Activated naive CD4-positive, alpha-beta T cell treated with anti-CD3 and anti-CD28 coated beads for 36 hours (primary cell): ENCODE measurements at regions of chr6 and their contacts with region 1.

Region 1: GRCh38 chr6:30914076-30914853 is at the start of gene VARS2:
- DNase-seq: peak; percentile 90
- H3K4me3 Mint-ChIP-seq: peak within 1 kb of the TSS; percentile 87
- H3K27ac Mint-ChIP-seq: peak within 1 kb of the TSS; percentile 86
- H3K4me1 Mint-ChIP-seq: peaks cover 28% of the 10 kb centered on the region
- H3K27me3 Mint-ChIP-seq: no peaks in the 10 kb centered on the region
- total RNA-seq, gene VARS2: 78.1 to 82.8 TPM

Region 2: GRCh38 chr6:30928677-30929076 is 14.4 kb after region 1 on chr6:
- CTCF ChIA-PET with region 1: interaction called, 11 read pairs
- intact Hi-C with region 1: no loop called
- DNase-seq: no peak
- H3K4me3 Mint-ChIP-seq: no peak overlapping the region
- H3K27ac Mint-ChIP-seq: no peak overlapping the region
- H3K4me1 Mint-ChIP-seq: no peaks in the 10 kb centered on the region
- H3K27me3 Mint-ChIP-seq: no peaks in the 10 kb centered on the region

Region 3: GRCh38 chr6:31042806-31043205 is 128.5 kb after region 1 on chr6:
- CTCF ChIA-PET with region 1: interaction called, 11 read pairs
- intact Hi-C with region 1: loop called (anchors 1 kb)
- DNase-seq: peak; percentile 46
- H3K4me3 Mint-ChIP-seq: no peak overlapping the region
- H3K27ac Mint-ChIP-seq: no peak overlapping the region
- H3K4me1 Mint-ChIP-seq: peaks cover 3% of the 10 kb centered on the region
- H3K27me3 Mint-ChIP-seq: peaks cover 9% of the 10 kb centered on the region

Region 4: DNA sequence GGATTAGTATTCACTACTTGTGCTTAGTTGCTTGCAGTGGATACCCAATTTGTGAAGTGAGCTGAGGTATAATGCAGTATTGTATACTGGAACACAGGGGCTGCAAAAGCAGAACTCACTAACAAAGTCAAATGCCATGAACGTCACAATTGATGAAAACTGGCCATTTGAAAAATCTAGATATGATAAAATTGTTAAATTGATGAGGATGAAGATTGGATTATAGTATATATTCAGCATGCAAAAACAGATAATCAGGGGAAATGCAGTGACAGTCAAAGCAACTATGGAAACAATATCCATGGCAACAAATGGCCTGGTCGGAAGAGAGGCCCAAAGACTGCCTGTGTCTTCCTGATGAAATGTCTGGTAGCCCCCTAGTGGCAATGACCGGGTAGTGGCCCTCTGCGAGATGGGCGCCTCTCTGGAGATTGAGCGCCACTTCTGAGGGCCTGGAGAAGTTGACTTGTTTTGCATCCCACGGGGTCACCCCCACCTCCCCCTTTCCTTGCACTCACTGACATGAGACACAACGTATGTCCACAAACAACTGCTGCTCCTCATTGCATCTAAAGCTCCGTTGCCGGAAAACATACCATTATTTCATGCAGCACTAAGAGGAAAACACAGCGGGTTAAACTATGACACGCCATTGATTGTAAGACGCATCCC is 154.5 kb after region 1 on chr6:
- CTCF ChIA-PET with region 1: interaction called, 27 read pairs
- intact Hi-C with region 1: loop called (anchors 1 kb)
- DNase-seq: peak; percentile 84
- H3K4me3 Mint-ChIP-seq: no peak overlapping the region
- H3K27ac Mint-ChIP-seq: no peak overlapping the region
- H3K4me1 Mint-ChIP-seq: no peaks in the 10 kb centered on the region
- H3K27me3 Mint-ChIP-seq: no peaks in the 10 kb centered on the region

Region 5: GRCh38 chr6:31079656-31080261 is 165.5 kb after region 1 on chr6:
- CTCF ChIA-PET with region 1: interaction called, 73 read pairs
- intact Hi-C with region 1: loop called (anchors 1 kb)
- DNase-seq: peak; percentile 86
- H3K4me3 Mint-ChIP-seq: peak overlapping the region; percentile 32
- H3K27ac Mint-ChIP-seq: no peak overlapping the region
- H3K4me1 Mint-ChIP-seq: peaks cover 8% of the 10 kb centered on the region
- H3K27me3 Mint-ChIP-seq: no peaks in the 10 kb centered on the region